ENCODE measurements at regions of chr7 and their contacts with region 1.

Region 1: GRCh38 chr7:157615101-157615817 is 278.5 kb downstream of the DNAJB6 start:
- DNase-seq: no peak
- ATAC-seq: no peak
- H3K4me3 ChIP-seq: no peak overlapping the region
- H3K27ac ChIP-seq: no peak overlapping the region
- H3K4me1 ChIP-seq: no peaks in the 10 kb centered on the region
- H3K27me3 ChIP-seq: no peaks in the 10 kb centered on the region
- CTCF ChIP-seq: no peak

Region 2: GRCh38 chr7:157576440-157576886 is 38.8 kb before region 1 on chr7:
- CTCF ChIA-PET with region 1: no interaction called
- POLR2A ChIA-PET with region 1: no interaction called
- in situ Hi-C with region 1: no loop called
- intact Hi-C with region 1: no loop called
- DNase-seq: no peak
- ATAC-seq: no peak
- H3K4me3 ChIP-seq: no peak overlapping the region
- H3K27ac ChIP-seq: no peak overlapping the region
- H3K4me1 ChIP-seq: no peaks in the 10 kb centered on the region
- H3K27me3 ChIP-seq: no peaks in the 10 kb centered on the region
- CTCF ChIP-seq: no peak

Region 3: DNA sequence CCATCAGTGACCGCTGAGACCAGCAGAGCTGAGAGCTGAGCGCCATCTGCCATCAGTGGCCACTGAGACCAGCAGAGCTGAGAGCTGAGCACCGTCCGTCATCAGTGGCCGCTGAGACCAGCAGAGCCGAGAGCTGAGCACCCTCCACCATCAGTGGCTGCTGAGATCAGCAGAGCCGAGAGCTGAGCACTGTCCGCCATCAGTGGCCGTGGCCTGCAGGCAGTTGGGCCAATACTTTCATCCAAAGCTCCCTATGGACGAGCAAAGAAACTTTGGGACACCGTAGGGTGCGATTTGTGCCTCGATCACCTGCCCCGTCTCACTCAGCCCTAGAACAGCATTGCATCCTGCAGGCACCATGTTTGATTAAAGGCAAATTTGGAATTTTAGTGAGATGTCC is 12.7 kb before region 1 on chr7:
- CTCF ChIA-PET with region 1: interaction called, 10 read pairs
- POLR2A ChIA-PET with region 1: no interaction called
- in situ Hi-C with region 1: no loop called
- intact Hi-C with region 1: no loop called
- DNase-seq: no peak
- ATAC-seq: no peak
- H3K4me3 ChIP-seq: no peak overlapping the region
- H3K27ac ChIP-seq: no peak overlapping the region
- H3K4me1 ChIP-seq: no peaks in the 10 kb centered on the region
- H3K27me3 ChIP-seq: no peaks in the 10 kb centered on the region
- CTCF ChIP-seq: no peak

Measured in Panc1 (cell line).